ENCODE measurements at regions of chr22 and their contacts with region 1.

Region 1: GRCh38 chr22:30079952-30080533 is at the start of gene HORMAD2:
- DNase-seq: peak; percentile 22
- H3K4me3 ChIP-seq: peak within 1 kb of the TSS in 1 of 3 experiments; percentile 25
- H3K27ac ChIP-seq: no peak within 1 kb of the TSS
- H3K4me1 ChIP-seq: no peaks in the 10 kb centered on the region
- H3K27me3 ChIP-seq: peaks cover 11 to 15% of the 10 kb centered on the region in 2 experiments
- CTCF ChIP-seq: no peak
- POLR2A ChIP-seq: no peak
- total RNA-seq, gene HORMAD2: not detected in 2 replicates

Region 2: DNA sequence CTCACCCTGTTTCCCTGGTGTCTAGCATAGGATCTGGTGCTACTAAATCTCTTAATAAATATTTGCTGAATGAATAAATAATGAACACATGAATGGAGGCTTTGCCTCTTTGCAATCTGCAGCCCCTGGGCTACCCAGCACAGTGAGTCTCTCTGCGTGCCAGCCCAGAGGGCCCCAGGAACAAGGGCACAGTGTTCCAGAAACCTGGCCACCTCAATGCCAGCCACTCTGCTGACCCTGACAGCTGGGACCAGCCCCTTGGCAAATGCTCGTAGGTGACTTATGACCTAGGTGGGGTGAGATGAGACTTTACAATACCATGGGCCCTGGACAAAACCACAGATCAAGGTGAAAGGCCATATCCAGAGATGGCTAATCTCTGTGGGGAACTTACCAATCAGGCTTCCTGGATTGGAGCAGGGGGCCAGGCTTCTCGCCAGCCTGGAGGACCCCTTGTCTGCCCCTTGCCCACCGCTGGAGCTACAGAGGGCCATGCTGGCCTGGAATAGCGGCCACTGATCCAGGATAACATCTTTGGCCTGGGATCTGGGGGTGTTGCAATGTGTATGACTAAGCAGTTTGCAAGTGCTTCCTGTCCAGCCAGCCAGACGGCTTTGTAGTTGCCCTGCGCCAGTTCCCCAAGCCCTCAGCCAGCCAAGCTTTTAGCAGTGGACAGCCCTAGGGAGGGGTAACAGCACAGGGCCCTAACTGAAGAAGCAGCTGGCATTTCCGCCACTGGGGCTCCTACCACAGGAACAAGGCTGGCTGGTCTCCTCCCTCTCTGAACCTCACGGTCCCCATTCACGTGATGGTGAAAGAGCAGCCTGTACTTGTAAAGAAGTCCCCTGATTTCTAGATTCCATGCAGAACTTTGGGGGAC is 281.0 kb before region 1 on chr22:
- CTCF ChIA-PET with region 1: no interaction called
- POLR2A ChIA-PET with region 1: no interaction called
- dilution Hi-C with region 1: no loop called
- intact Hi-C with region 1: loop called (anchors 10 kb)
- DNase-seq: peak; percentile 88
- H3K4me3 ChIP-seq: no peak overlapping the region
- H3K27ac ChIP-seq: peak overlapping the region; percentile 50
- H3K4me1 ChIP-seq: peaks cover 14% of the 10 kb centered on the region
- H3K27me3 ChIP-seq: no peaks in the 10 kb centered on the region
- CTCF ChIP-seq: no peak
- POLR2A ChIP-seq: no peak